ENCODE measurements at regions of chr6 and their contacts with region 1.

Region 1: DNA sequence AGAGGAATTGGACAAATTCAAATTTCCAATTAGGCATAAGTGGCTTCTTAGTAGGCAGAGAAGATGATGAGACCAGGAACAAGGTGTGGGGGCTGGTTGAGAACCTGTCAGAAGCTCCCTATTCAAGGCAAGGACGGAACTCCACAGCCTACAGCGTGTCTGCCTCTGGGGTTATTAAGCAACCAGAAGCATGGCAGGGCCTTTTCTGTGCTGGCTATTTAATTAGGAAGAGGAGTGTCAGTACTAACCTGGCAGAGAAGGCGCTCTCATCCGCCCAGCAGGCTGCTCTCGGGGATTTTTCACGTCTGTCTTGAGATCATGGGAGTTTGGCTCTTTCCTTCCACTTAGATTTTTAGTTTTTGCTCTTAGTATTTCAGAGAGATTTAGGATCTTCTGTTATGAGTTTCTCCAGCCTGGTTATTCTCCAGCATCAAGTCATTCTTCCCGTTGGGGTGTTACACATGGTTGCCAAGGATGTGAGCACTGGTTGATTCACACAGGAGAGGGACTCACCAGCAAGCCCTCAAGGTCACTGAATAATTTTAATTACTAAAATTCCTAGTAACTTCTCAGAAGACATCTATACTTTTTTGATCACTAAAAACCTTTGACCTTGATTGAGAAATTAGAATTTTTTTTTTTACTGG is 23.9 kb downstream of the ADTRP start:
- DNase-seq: no peak
- CTCF ChIP-seq: no peak

Region 2: GRCh38 chr6:11770546-11771466 is 16.1 kb after region 1 on chr6:
- CTCF ChIA-PET with region 1: interaction called, 16 read pairs
- POLR2A ChIA-PET with region 1: no interaction called
- DNase-seq: peak; percentile 28
- CTCF ChIP-seq: no peak

Region 3: GRCh38 chr6:11814106-11814505 is 59.4 kb after region 1 on chr6:
- CTCF ChIA-PET with region 1: no interaction called
- POLR2A ChIA-PET with region 1: no interaction called
- DNase-seq: no peak
- CTCF ChIP-seq: no peak

Measured in GM10248 (cell line).